ENCODE measurements at regions of chr2 and their contacts with region 1.

Region 1: GRCh38 chr2:160994141-160995002 is 165.9 kb upstream of the TANK start:
- DNase-seq: peak; percentile 28
- ATAC-seq: peak; percentile 90
- H3K4me3 ChIP-seq: no peak overlapping the region
- H3K27ac ChIP-seq: no peak overlapping the region
- H3K4me1 ChIP-seq: no peaks in the 10 kb centered on the region
- H3K27me3 ChIP-seq: no peaks in the 10 kb centered on the region
- CTCF ChIP-seq: peak; percentile 77 to 88 (median 78)
- EP300 ChIP-seq: no peak
- POLR2A ChIP-seq: no peak
- RAD21 ChIP-seq: peak; percentile 87

Region 2: DNA sequence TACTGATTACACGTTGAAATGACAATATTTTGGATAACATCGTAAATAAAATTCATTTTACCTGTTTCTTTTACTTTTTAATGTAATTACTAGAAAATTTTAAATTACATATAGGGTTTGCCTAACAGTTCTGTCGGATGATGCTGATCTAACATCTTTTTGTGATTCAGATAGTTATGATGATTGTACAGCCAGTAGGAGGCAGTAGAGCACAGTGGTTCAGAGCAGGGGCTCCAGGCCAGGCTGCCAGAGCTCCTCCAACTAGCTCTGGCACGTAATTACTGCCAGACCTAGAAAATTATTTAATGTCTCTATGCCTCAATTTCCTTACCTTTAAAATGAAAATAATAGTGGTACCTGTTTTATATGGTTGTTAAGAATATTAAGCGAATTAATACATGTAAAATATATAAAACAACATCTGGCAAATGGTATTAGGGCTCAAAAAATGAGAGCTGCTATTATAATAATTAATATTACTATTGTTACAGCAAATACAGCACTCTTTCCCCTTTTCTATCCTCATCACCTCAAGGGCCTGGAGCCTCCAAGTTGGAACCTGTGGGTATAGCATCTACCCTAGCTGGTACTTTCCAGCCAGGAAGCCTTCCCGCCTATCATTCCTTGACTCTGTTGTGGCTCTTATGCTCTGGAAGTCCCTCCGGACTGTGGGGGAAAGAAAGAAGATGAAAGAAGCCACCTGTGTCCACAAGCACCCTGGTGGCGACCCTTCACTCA is 884.3 kb before region 1 on chr2:
- CTCF ChIA-PET with region 1: interaction called, 23 read pairs
- POLR2A ChIA-PET with region 1: no interaction called
- RAD21 ChIA-PET with region 1: interaction called, 9 read pairs
- SMC1A ChIA-PET with region 1: interaction called, 3 read pairs
- in situ Hi-C with region 1: no loop called
- intact Hi-C with region 1: loop called (anchors 10 kb)
- DNase-seq: no peak
- ATAC-seq: peak; percentile 84
- H3K4me3 ChIP-seq: no peak overlapping the region
- H3K27ac ChIP-seq: no peak overlapping the region
- H3K4me1 ChIP-seq: peaks cover 13% of the 10 kb centered on the region
- H3K27me3 ChIP-seq: no peaks in the 10 kb centered on the region
- CTCF ChIP-seq: peak; percentile 68 to 87 (median 80)
- EP300 ChIP-seq: no peak
- POLR2A ChIP-seq: no peak
- RAD21 ChIP-seq: peak; percentile 90

Region 3: DNA sequence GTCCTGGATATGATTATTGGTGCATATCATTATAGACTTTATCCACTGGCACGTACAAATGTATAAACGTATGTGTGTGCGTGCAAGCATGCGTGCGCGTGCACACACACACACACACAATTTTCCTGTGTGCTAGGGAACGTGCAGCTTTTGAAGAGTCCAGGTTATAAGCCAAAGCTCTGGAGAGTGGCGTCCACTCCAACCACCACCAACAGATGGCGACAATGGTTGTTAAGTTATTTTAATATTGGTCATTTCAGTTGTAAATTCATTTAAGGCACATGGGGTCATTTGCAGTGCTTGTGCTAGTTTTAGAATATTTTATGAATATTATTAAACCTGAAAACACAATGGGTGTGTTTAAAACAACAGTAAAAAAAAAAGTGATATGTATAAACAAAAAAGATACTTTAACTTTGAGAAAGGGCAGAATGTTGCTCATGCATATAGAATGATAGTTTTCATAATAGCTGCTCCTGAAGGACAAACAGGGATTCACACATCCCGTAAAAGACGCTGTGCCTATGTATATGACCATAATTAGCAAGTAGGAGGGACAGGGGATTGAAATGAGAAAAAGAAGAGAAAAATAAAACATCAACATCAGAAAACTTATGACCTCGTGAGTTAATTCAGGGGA is 670.1 kb before region 1 on chr2:
- CTCF ChIA-PET with region 1: interaction called, 100 read pairs
- POLR2A ChIA-PET with region 1: no interaction called
- RAD21 ChIA-PET with region 1: interaction called, 19 read pairs
- SMC1A ChIA-PET with region 1: interaction called, 50 read pairs
- in situ Hi-C with region 1: no loop called
- intact Hi-C with region 1: loop called (anchors 2 kb)
- DNase-seq: no peak
- ATAC-seq: peak; percentile 82
- H3K4me3 ChIP-seq: no peak overlapping the region
- H3K27ac ChIP-seq: no peak overlapping the region
- H3K4me1 ChIP-seq: no peaks in the 10 kb centered on the region
- H3K27me3 ChIP-seq: no peaks in the 10 kb centered on the region; a peak in 1 of 4 replicates
- CTCF ChIP-seq: peak; percentile 60 to 72 (median 63)
- EP300 ChIP-seq: no peak
- POLR2A ChIP-seq: no peak
- RAD21 ChIP-seq: peak; percentile 64

Region 4: DNA sequence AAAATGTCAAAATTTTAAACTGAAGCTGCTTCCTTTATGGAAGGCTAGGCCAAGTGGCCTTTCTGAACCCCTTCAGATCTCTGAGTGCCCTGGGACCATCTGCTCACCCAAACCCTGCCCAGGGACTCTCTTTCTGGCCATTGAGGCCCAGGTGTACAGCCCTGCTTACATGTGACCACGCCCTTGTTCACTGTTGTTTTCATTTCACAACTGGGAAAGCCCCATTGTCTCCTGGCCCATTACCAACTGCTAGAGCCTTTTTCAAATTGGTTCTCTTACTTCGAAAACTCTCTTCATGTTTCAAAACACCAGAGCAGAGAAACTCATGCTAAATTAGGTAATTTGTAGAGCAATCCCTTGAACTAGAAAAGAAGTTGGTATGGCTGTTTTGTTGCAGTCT is 53.7 kb before region 1 on chr2:
- CTCF ChIA-PET with region 1: interaction called, 10 read pairs
- POLR2A ChIA-PET with region 1: no interaction called
- RAD21 ChIA-PET with region 1: no interaction called
- SMC1A ChIA-PET with region 1: no interaction called
- in situ Hi-C with region 1: no loop called
- intact Hi-C with region 1: no loop called
- DNase-seq: peak; percentile 4
- ATAC-seq: peak; percentile 96
- H3K4me3 ChIP-seq: no peak overlapping the region
- H3K27ac ChIP-seq: no peak overlapping the region
- H3K4me1 ChIP-seq: no peaks in the 10 kb centered on the region
- H3K27me3 ChIP-seq: no peaks in the 10 kb centered on the region
- CTCF ChIP-seq: no peak
- EP300 ChIP-seq: no peak
- POLR2A ChIP-seq: no peak
- RAD21 ChIP-seq: no peak

Region 5: DNA sequence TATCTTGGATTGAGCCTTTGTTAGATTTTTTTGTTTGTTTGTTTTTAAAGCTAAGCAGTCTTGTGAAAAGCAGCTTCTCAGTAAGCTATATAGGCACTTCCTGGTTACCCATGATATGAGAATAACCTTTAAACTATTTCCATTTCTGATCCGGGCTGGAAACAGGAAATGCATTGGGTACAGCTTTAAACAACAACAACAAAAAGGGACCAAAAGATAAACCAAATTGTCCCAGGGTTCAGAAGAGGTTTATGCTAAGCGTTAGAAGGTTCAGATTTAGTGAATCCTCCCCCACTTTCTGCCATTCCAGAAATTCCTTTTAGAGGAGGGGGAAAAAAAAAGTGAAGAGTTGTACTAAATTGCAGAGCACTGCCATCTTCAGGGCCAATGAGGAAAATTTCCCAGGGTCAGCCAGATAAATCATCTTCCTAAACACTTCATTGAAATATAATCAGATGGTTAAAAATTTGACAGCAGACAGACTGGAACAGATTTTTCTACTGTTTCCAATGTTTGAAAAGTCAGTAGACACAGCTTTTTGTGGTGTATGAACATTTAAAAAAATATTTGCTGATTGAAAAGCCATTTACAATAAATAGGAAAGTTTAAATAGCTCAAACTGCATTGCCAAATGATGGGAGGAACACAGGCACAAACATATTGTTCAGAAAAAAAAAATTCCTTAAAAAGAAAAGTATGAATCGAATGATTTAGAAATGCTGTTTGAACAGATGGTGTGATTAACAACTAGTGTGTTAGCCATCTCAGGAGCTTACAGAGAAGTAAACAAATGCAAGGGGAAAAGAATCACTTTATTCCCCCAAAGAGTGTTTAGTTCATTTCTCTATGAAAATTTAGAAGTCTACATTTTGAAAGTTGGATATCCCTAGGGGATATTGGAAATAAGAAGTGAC is 24.1 kb before region 1 on chr2:
- CTCF ChIA-PET with region 1: interaction called, 20 read pairs
- POLR2A ChIA-PET with region 1: no interaction called
- RAD21 ChIA-PET with region 1: no interaction called
- SMC1A ChIA-PET with region 1: interaction called, 7 read pairs
- in situ Hi-C with region 1: no loop called
- intact Hi-C with region 1: no loop called
- DNase-seq: no peak
- ATAC-seq: 0 out of 3 replicates have a peak, but pooled peaks have one; percentile 20
- H3K4me3 ChIP-seq: no peak overlapping the region
- H3K27ac ChIP-seq: no peak overlapping the region
- H3K4me1 ChIP-seq: no peaks in the 10 kb centered on the region
- H3K27me3 ChIP-seq: peaks cover 0 to 2% of the 10 kb centered on the region in 2 experiments; a peak in 2 of 4 replicates
- CTCF ChIP-seq: peak; percentile 36 to 50 (median 37); a peak in 4 of 6 replicates
- EP300 ChIP-seq: no peak
- POLR2A ChIP-seq: no peak
- RAD21 ChIP-seq: peak; percentile 58

Region 6: DNA sequence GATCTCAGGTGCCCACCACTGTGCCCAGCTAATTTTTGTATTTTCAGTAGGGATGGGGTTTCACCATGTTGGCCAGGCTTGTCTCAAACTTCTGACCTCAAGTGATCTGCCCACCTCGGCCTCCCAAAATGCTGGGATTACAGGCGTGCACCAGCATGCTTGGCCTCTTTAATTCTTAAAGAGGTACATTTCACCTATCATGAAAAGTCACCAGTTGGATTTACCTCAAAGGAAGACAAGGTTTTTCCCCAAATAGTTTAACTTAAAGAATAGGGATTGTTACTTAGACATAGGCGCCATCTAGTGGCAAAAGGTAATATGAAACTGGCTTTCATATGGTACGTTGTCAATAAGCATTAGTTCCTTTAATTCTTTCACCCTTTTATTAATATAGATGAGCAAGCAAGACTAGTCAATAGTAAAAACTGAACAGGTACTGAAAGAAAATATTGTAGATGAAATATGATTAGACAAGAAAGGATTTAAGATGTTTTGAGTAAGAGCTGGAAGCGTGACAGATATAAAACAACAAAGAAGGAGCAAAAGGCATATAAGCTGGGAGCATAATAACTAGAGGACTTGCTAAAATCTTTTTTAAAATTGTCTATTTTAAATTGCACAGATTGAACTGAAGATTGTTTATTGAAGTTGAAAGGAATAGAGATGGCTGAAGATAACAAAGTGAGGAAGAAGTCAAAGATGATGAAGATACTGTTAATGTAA is 278.8 kb after region 1 on chr2:
- CTCF ChIA-PET with region 1: interaction called, 5 read pairs
- POLR2A ChIA-PET with region 1: no interaction called
- RAD21 ChIA-PET with region 1: interaction called, 5 read pairs
- SMC1A ChIA-PET with region 1: interaction called, 6 read pairs
- in situ Hi-C with region 1: no loop called
- intact Hi-C with region 1: loop called (anchors 10 kb)
- DNase-seq: peak; percentile 23
- ATAC-seq: peak; percentile 90
- H3K4me3 ChIP-seq: no peak overlapping the region
- H3K27ac ChIP-seq: no peak overlapping the region
- H3K4me1 ChIP-seq: no peaks in the 10 kb centered on the region
- H3K27me3 ChIP-seq: no peaks in the 10 kb centered on the region
- CTCF ChIP-seq: peak; percentile 45 to 66 (median 57); a peak in 5 of 6 replicates
- EP300 ChIP-seq: no peak
- POLR2A ChIP-seq: no peak
- RAD21 ChIP-seq: peak; percentile 82

Measured in GM12878 (cell line).